ENCODE measurements at regions of chr11 and their contacts with region 1.

Region 1: DNA sequence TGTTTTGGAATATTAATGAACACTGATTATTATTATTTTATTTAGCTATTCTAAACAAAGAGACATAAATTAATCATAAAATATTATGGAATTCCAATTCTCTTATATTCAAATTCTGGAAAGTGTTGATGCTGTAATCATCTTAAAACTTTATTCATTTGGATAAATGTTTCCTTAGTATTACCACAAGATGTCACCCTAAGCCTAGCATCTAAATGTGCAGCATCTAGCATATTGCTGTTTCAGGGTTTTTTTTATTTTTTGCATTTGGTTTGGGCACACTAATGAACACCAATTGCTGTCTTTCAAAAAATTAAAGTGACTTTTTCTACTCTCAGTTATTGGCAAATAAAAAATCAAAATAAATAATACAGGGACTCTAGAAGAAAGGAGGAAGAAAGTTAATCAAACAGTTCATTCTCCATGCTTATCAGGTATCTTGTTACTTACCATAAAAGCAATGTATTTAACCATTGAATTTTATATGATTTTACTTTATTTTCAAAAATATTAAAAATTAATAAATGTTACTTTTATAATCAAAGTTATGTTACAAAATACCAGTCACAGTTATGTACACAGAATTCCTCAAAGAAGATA is 31.8 kb downstream of the DLG2 start:
- DNase-seq: peak in 4 of 5 donors; percentile 41 to 63 (median 54)
- H3K4me3 ChIP-seq: no peak overlapping the region
- H3K4me3 Mint-ChIP-seq: no peak overlapping the region
- H3K27ac ChIP-seq: no peak overlapping the region
- H3K27ac Mint-ChIP-seq: no peak overlapping the region
- H3K4me1 ChIP-seq: no peaks in the 10 kb centered on the region
- H3K4me1 Mint-ChIP-seq: no peaks in the 10 kb centered on the region
- H3K27me3 ChIP-seq: no peaks in the 10 kb centered on the region
- H3K27me3 Mint-ChIP-seq: peaks cover 0 to 3% of the 10 kb centered on the region in 2 donors

Region 2: GRCh38 chr11:85694386-85694980 is 99.1 kb after region 1 on chr11:
- CTCF ChIA-PET with region 1: interaction called, 3 read pairs
- POLR2A ChIA-PET with region 1: no interaction called
- intact Hi-C with region 1: loop called (anchors 5 kb)
- DNase-seq: peak in 4 of 5 donors; percentile 40 to 57 (median 45)
- H3K4me3 ChIP-seq: no peak overlapping the region
- H3K4me3 Mint-ChIP-seq: no peak overlapping the region
- H3K27ac ChIP-seq: no peak overlapping the region
- H3K27ac Mint-ChIP-seq: peak overlapping the region in 2 of 7 donors; percentile 7 to 53
- H3K4me1 ChIP-seq: peaks cover 5% of the 10 kb centered on the region
- H3K4me1 Mint-ChIP-seq: peaks cover 8 to 12% (median 9%) of the 10 kb centered on the region in 4 donors
- H3K27me3 ChIP-seq: no peaks in the 10 kb centered on the region
- H3K27me3 Mint-ChIP-seq: peaks cover 0 to 2% of the 10 kb centered on the region in 2 donors

Region 3: DNA sequence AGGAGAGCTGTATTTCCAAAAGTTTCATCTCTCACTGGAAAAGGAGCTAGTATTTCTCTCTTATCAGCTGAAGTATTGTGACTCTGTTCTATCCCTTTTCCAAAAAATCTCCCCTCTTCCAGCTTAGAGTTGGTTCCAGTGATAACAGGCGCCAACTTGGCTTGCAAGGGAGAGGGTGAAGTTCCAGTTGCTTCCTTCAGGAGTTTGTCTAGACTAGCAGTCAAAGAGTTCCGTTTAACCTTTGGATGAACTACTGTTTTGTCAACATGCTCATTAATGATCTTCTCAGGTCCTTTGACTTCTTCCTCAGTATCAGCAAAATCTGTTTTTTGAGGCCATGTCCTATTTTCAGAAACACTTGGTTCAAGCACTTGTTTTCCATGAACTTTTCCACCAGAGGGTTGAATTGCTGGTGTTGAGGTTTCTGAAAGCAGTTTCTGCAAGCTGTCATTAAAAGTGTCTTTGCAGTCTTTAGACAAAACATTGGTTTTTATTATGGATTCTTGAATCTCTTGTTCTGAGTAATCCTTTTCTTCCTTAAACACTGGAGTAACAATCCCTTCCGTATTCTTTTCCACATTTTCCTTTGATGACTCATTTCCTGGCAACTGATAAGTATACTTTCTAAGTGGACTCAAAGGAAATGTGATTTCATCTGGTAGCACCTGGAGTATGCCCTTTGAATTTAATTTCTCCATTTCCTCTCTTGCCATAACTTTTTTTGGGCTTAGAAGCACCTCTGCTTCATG is 130.3 kb after region 1 on chr11:
- CTCF ChIA-PET with region 1: no interaction called
- POLR2A ChIA-PET with region 1: no interaction called
- intact Hi-C with region 1: no loop called
- DNase-seq: no peak
- H3K4me3 ChIP-seq: no peak overlapping the region
- H3K4me3 Mint-ChIP-seq: no peak overlapping the region
- H3K27ac ChIP-seq: no peak overlapping the region
- H3K27ac Mint-ChIP-seq: peak overlapping the region in 2 of 7 donors; percentile 41 to 43
- H3K4me1 ChIP-seq: no peaks in the 10 kb centered on the region
- H3K4me1 Mint-ChIP-seq: peaks cover 0 to 15% (median 7%) of the 10 kb centered on the region in 4 donors
- H3K27me3 ChIP-seq: no peaks in the 10 kb centered on the region
- H3K27me3 Mint-ChIP-seq: no peaks in the 10 kb centered on the region

Region 4: GRCh38 chr11:85988780-85989179 is 393.4 kb after region 1 on chr11:
- CTCF ChIA-PET with region 1: no interaction called
- POLR2A ChIA-PET with region 1: no interaction called
- intact Hi-C with region 1: loop called (anchors 10 kb)
- DNase-seq: no peak
- H3K4me3 ChIP-seq: no peak overlapping the region
- H3K4me3 Mint-ChIP-seq: no peak overlapping the region
- H3K27ac ChIP-seq: peak overlapping the region; percentile 6
- H3K27ac Mint-ChIP-seq: peak overlapping the region; percentile 6 to 87 (median 53)
- H3K4me1 ChIP-seq: no peaks in the 10 kb centered on the region
- H3K4me1 Mint-ChIP-seq: peaks cover 10 to 28% (median 17%) of the 10 kb centered on the region in 4 donors
- H3K27me3 ChIP-seq: no peaks in the 10 kb centered on the region
- H3K27me3 Mint-ChIP-seq: no peaks in the 10 kb centered on the region

Region 5: DNA sequence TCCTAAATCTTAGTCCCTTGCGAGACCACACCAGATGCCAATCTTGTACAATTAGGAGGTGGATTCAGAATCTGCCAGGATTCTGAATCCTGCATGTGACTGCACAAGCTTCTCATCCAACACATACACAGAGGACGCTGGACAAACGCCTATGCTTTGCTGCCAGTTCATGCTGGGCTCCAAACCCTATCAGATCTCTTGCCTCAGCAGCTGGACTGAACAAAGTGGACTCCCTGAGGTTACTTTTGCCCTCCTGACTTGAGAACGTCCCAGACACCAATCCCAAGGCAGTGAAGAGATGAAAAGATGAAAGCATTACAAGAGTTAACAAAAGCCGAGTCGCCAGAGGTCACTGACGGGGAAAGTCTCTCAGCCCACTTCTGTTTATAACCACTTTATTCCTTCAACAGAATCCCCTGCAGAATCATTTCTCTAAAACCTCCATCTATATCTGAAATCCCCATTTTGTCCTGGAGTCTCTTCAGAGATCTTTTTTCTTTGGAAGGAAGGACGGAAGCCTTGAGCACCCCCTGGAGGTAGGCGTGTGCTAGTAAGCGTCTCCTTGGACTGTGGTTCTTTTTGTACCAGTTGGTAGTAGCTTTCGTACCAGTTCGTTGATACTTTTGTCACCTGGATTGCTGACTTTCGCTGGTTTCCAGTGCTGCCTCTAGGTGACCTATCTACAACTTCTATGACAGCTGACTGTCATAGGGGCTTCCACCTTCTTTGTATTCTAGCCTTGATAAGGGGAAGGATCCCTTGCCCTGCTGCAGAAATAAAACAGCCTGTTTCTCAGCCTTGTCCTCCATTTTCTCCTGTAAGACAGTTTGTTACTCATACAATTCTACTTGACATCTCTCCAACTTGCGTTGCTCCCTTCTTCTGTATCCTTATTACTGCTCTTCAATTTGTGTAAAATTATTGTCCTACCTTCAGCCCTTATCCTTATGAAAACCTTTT is 623.0 kb after region 1 on chr11:
- CTCF ChIA-PET with region 1: interaction called, 3 read pairs
- POLR2A ChIA-PET with region 1: no interaction called
- intact Hi-C with region 1: loop called (anchors 1 kb)
- DNase-seq: peak; percentile 51 to 63 (median 55)
- H3K4me3 ChIP-seq: peak overlapping the region in 1 of 2 donors; percentile 3
- H3K4me3 Mint-ChIP-seq: peak overlapping the region; percentile 65 to 89 (median 75)
- H3K27ac ChIP-seq: no peak overlapping the region
- H3K27ac Mint-ChIP-seq: peak overlapping the region in 3 of 7 donors; percentile 24 to 72 (median 31)
- H3K4me1 ChIP-seq: peaks cover 4% of the 10 kb centered on the region
- H3K4me1 Mint-ChIP-seq: peaks cover 10 to 18% (median 11%) of the 10 kb centered on the region in 4 donors
- H3K27me3 ChIP-seq: no peaks in the 10 kb centered on the region
- H3K27me3 Mint-ChIP-seq: peaks cover 7 to 9% of the 10 kb centered on the region in 2 donors

Region 6: GRCh38 chr11:87290304-87290922 is 1695.0 kb after region 1 on chr11:
- CTCF ChIA-PET with region 1: no interaction called
- POLR2A ChIA-PET with region 1: no interaction called
- intact Hi-C with region 1: loop called (anchors 5 kb)
- DNase-seq: peak in 4 of 5 donors; percentile 33 to 54 (median 44)
- H3K4me3 ChIP-seq: no peak overlapping the region
- H3K4me3 Mint-ChIP-seq: no peak overlapping the region
- H3K27ac ChIP-seq: no peak overlapping the region
- H3K27ac Mint-ChIP-seq: no peak overlapping the region
- H3K4me1 ChIP-seq: no peaks in the 10 kb centered on the region
- H3K4me1 Mint-ChIP-seq: no peaks in the 10 kb centered on the region
- H3K27me3 ChIP-seq: no peaks in the 10 kb centered on the region
- H3K27me3 Mint-ChIP-seq: no peaks in the 10 kb centered on the region

Measured in CD4-positive, alpha-beta memory T cell (primary cell).